ENCODE measurements at regions of chr2 and their contacts with region 1.

Region 1: DNA sequence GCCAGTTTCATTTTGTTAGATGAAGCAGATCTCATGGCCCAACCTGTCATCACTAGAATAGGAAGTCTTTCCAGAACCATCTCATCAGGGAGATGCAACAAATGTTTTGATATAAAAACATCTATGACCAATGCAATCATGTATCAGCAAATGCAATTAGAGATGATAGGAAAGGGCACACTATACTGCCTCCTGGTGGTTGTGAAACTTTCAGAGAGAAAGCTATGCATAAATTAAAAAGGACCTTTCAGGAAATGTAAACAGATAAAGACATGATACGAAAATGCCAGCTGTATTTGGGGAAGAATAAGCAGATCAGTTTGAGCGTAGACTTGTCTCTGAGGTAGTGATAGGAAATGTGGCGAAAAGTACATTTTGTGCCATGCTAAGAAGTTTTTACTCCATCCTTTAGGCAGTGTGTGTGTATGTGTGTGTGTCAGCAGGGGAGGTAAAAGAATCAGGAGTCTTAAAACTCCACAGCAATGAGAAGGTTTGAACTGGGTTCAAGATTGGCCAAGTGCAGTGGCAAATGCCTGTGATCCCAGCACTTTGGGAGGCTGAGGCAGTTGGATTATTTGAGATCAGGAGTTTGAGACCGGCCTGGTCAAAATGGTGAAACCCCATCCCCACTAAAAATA is 479.3 kb downstream of the CPS1 start:
- DNase-seq: peak; percentile 22
- ATAC-seq: peak; percentile 62; the same call in 1 of the 2 replicates
- H3K4me3 ChIP-seq: no peak overlapping the region
- H3K27ac ChIP-seq: no peak overlapping the region
- H3K4me1 ChIP-seq: no peaks in the 10 kb centered on the region
- H3K27me3 ChIP-seq: no peaks in the 10 kb centered on the region
- CTCF ChIP-seq: peak; percentile 63 to 88 (median 67)
- POLR2A ChIP-seq: no peak
- RAD21 ChIP-seq: peak; percentile 63

Region 2: DNA sequence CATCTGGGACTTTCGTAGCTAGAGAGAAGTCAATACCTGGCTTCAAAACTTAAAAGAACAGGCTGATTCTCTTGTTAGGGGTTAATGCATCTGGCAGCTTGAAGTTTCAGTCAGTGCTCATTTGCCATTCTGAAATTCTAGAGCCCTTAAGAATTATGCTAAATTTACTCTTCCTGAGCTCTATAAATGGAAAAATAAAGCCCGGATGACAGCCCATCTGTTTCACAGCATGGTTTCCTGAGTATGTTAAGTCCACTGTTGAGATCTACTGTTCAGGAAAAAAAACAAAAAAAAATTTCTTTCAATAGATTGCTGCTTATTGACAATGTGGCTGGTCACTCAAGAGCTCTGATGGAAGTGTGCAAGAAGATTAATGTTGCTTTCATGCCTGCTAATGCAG is 1134.5 kb before region 1 on chr2:
- CTCF ChIA-PET with region 1: no interaction called
- POLR2A ChIA-PET with region 1: no interaction called
- RAD21 ChIA-PET with region 1: no interaction called
- intact Hi-C with region 1: no loop called
- DNase-seq: no peak
- ATAC-seq: no peak
- H3K4me3 ChIP-seq: no peak overlapping the region
- H3K27ac ChIP-seq: no peak overlapping the region
- H3K4me1 ChIP-seq: no peaks in the 10 kb centered on the region
- H3K27me3 ChIP-seq: no peaks in the 10 kb centered on the region
- CTCF ChIP-seq: no peak
- POLR2A ChIP-seq: no peak
- RAD21 ChIP-seq: no peak

Region 3: DNA sequence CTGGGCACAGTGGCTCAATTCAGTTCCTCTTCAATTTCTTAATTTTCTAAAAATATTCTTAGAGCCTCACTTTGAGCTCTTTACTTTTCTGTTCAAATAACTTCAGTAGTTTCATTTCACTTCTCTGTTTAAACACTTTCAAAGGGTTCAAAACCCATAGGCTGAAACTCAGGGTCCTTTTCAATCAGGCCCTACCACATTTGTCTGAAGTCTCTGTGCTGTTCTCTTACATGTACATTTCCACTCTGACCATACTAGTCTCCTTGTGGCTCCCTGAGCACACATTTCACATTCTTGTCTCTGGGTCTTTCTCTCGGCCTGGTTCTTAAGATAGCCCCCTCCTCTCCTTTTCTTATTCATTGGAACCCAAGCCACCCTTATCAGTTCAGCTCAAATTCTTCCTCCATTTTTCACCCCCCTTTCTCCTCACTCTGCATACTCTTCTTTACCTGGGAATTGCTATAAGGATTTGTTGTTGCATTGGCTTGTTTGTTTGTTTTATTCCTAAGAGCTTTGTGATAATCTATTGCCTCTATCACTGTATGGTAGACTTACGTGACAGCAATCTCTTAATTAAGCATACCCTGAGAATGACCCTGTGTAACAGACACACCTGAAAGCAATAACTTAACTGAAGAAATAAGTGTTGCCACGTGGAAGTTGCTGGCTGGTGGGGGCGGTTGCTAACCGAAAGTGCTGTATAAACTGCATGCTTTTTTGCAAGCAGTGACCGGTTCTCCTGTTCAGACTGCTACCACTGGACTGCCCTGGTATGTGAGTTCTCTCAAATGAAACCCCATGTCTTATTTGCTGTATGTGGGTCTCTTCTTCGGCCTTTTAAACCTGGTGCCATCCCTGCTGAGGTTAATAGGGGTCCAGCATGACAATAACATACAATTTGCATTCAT is 782.7 kb before region 1 on chr2:
- CTCF ChIA-PET with region 1: no interaction called
- POLR2A ChIA-PET with region 1: no interaction called
- RAD21 ChIA-PET with region 1: no interaction called
- intact Hi-C with region 1: loop called (anchors 10 kb)
- DNase-seq: no peak
- ATAC-seq: no peak
- H3K4me3 ChIP-seq: no peak overlapping the region
- H3K27ac ChIP-seq: no peak overlapping the region
- H3K4me1 ChIP-seq: no peaks in the 10 kb centered on the region
- H3K27me3 ChIP-seq: no peaks in the 10 kb centered on the region
- CTCF ChIP-seq: no peak
- POLR2A ChIP-seq: no peak
- RAD21 ChIP-seq: no peak

Region 4: DNA sequence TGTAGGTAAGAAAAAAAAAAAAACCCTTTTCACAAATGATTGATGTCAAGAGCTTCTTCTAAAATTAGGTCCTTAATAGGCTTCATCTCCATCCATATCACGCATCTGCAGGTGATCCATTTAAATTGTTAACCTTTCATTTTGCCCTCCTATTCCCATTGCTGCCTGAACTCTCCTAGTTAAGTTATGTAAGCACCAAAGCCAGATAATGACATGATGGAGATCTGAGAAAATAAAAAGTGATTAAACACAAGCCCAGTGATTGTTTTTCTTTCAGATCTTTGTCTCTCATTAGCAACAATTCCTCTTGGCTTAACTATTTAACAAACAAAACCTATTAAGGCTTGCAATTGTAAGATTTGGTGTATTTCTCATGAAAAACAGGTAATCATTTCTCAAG is 579.1 kb before region 1 on chr2:
- CTCF ChIA-PET with region 1: no interaction called
- POLR2A ChIA-PET with region 1: no interaction called
- RAD21 ChIA-PET with region 1: no interaction called
- intact Hi-C with region 1: no loop called
- DNase-seq: no peak
- ATAC-seq: no peak
- H3K4me3 ChIP-seq: no peak overlapping the region
- H3K27ac ChIP-seq: no peak overlapping the region
- H3K4me1 ChIP-seq: no peaks in the 10 kb centered on the region
- H3K27me3 ChIP-seq: no peaks in the 10 kb centered on the region
- CTCF ChIP-seq: no peak
- POLR2A ChIP-seq: no peak
- RAD21 ChIP-seq: no peak

Region 5: DNA sequence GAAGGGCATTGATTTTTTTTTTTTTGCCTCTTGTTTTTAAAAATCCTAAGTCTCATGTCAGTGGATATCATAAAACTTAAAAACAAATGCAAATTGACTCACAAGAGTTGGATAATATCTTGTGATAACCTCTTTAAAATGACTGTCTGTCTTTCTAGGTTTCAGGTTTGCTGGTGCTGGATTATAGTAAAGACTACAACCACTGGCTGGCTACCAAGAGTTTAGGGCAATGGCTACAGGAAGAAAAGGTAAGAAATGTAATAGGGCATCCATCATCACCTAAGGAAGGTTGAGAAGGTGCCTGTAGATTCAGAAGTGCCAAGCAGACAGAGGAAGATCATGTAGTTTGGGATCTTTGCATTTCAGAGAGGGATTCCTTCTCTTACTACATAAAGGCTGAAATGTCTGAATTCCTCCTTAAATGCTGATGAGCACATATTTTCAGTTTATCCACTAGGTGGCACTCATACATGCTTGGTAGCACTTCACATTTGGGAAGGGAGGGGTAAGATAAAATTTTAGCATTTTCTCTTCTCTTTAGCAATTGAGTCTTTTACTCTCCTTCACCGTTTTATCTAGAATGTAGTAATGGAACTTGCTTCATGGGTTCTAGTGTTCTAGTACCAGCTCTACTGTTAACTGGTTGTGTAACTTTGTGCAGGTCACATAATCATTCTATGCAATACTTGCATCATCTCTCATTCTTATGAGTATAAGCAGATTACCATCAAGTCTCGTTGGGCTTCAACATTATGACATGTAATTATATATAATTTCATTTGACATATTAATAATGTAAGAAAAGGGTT is 458.2 kb before region 1 on chr2:
- CTCF ChIA-PET with region 1: no interaction called
- POLR2A ChIA-PET with region 1: no interaction called
- RAD21 ChIA-PET with region 1: no interaction called
- intact Hi-C with region 1: loop called (anchors 1 kb)
- DNase-seq: peak; percentile 33
- ATAC-seq: peak; percentile 71; the same call in 1 of the 2 replicates
- H3K4me3 ChIP-seq: no peak overlapping the region
- H3K27ac ChIP-seq: no peak overlapping the region
- H3K4me1 ChIP-seq: no peaks in the 10 kb centered on the region
- H3K27me3 ChIP-seq: no peaks in the 10 kb centered on the region
- CTCF ChIP-seq: peak; percentile 52 to 85 (median 75); a peak in 5 of 6 replicates
- POLR2A ChIP-seq: no peak
- RAD21 ChIP-seq: peak; percentile 69

Region 6: DNA sequence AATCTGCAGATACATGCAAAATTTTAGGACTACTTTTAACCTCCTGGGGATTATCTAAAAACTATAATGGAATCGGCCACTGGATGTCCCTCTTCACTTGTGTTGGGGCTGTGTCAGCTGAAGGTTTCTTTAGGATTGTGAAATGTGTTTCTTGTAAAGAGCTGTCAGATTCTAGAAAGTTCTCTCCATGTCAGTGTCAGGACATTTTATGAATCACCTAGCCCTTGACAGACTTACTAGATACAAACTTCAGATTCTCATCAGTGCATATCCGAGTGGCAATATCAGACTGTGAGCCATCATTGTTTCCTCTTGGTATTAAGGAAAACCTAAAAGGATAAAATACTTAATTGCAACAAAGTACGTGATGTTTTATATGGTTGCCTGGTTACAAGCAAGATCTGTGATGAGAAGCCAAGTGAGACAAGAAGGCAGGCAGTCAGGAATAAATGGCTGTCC is 372.0 kb before region 1 on chr2:
- CTCF ChIA-PET with region 1: interaction called, 3 read pairs
- POLR2A ChIA-PET with region 1: no interaction called
- RAD21 ChIA-PET with region 1: no interaction called
- intact Hi-C with region 1: loop called (anchors 5 kb)
- DNase-seq: no peak
- ATAC-seq: no peak
- H3K4me3 ChIP-seq: no peak overlapping the region
- H3K27ac ChIP-seq: no peak overlapping the region
- H3K4me1 ChIP-seq: no peaks in the 10 kb centered on the region
- H3K27me3 ChIP-seq: no peaks in the 10 kb centered on the region
- CTCF ChIP-seq: peak in 2 of 3 experiments; percentile 27 to 37; a peak in 3 of 6 replicates
- POLR2A ChIP-seq: no peak
- RAD21 ChIP-seq: peak; percentile 55

Region 7: GRCh38 chr2:211157856-211158463 is 122.3 kb after region 1 on chr2:
- CTCF ChIA-PET with region 1: interaction called, 7 read pairs
- POLR2A ChIA-PET with region 1: no interaction called
- RAD21 ChIA-PET with region 1: no interaction called
- intact Hi-C with region 1: loop called (anchors 5 kb)
- DNase-seq: peak; percentile 57
- ATAC-seq: peak; percentile 94
- H3K4me3 ChIP-seq: no peak overlapping the region
- H3K27ac ChIP-seq: no peak overlapping the region
- H3K4me1 ChIP-seq: no peaks in the 10 kb centered on the region
- H3K27me3 ChIP-seq: no peaks in the 10 kb centered on the region
- CTCF ChIP-seq: peak; percentile 66 to 85 (median 80)
- POLR2A ChIP-seq: no peak
- RAD21 ChIP-seq: peak; percentile 61

Region 8: GRCh38 chr2:211269422-211269821 is 233.8 kb after region 1 on chr2:
- CTCF ChIA-PET with region 1: no interaction called
- POLR2A ChIA-PET with region 1: no interaction called
- RAD21 ChIA-PET with region 1: no interaction called
- intact Hi-C with region 1: no loop called
- DNase-seq: no peak
- ATAC-seq: no peak
- H3K4me3 ChIP-seq: no peak overlapping the region
- H3K27ac ChIP-seq: no peak overlapping the region
- H3K4me1 ChIP-seq: no peaks in the 10 kb centered on the region
- H3K27me3 ChIP-seq: no peaks in the 10 kb centered on the region
- CTCF ChIP-seq: no peak
- POLR2A ChIP-seq: no peak
- RAD21 ChIP-seq: no peak

Region 9: GRCh38 chr2:211631503-211631902 is 595.8 kb after region 1 on chr2:
- CTCF ChIA-PET with region 1: no interaction called
- POLR2A ChIA-PET with region 1: no interaction called
- RAD21 ChIA-PET with region 1: no interaction called
- intact Hi-C with region 1: no loop called
- DNase-seq: no peak
- ATAC-seq: no peak
- H3K4me3 ChIP-seq: no peak overlapping the region
- H3K27ac ChIP-seq: no peak overlapping the region
- H3K4me1 ChIP-seq: no peaks in the 10 kb centered on the region
- H3K27me3 ChIP-seq: no peaks in the 10 kb centered on the region
- CTCF ChIP-seq: no peak
- POLR2A ChIP-seq: no peak
- RAD21 ChIP-seq: no peak

Measured in HCT116 (cell line).